ENCODE measurements at regions of chr2 and their contacts with region 1.

Region 1: GRCh38 chr2:133517876-133518275 is 50.4 kb downstream of the NCKAP5 start:
- DNase-seq: no peak
- ATAC-seq: no peak
- H3K4me3 ChIP-seq: no peak overlapping the region
- H3K27ac ChIP-seq: no peak overlapping the region
- H3K4me1 ChIP-seq: no peaks in the 10 kb centered on the region
- H3K27me3 ChIP-seq: no peaks in the 10 kb centered on the region
- CTCF ChIP-seq: no peak
- EP300 ChIP-seq: no peak
- POLR2A ChIP-seq: no peak
- RAD21 ChIP-seq: no peak

Region 2: DNA sequence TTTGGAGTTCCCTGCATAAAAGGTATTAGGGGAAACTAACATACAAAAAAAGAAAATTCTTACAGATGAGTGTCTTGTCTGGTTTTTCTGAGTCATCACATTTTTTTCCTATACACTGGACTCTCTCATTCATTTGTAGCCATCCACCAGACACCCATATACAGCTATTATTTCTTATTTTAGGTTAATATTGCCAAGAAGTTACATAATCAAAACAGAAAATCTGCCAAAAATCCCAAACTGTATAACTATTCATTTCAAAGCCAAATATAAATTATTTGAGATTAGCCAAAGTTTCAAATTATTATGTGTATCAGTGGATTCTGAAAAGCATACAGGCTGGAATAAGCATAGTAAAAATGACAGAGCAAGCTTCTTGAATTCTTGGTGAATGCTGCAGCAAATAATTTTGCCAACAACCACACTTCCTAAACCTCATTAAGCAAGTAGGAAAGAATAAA is 140.8 kb before region 1 on chr2:
- CTCF ChIA-PET with region 1: no interaction called
- POLR2A ChIA-PET with region 1: no interaction called
- in situ Hi-C with region 1: no loop called
- intact Hi-C with region 1: no loop called
- DNase-seq: no peak
- ATAC-seq: no peak
- H3K4me3 ChIP-seq: no peak overlapping the region
- H3K27ac ChIP-seq: no peak overlapping the region
- H3K4me1 ChIP-seq: no peaks in the 10 kb centered on the region
- H3K27me3 ChIP-seq: no peaks in the 10 kb centered on the region
- CTCF ChIP-seq: no peak
- EP300 ChIP-seq: no peak
- POLR2A ChIP-seq: no peak
- RAD21 ChIP-seq: no peak

Region 3: GRCh38 chr2:133504566-133505393 is 13.1 kb before region 1 on chr2:
- CTCF ChIA-PET with region 1: no interaction called
- POLR2A ChIA-PET with region 1: no interaction called
- in situ Hi-C with region 1: no loop called
- intact Hi-C with region 1: no loop called
- DNase-seq: no peak
- ATAC-seq: no peak
- H3K4me3 ChIP-seq: no peak overlapping the region
- H3K27ac ChIP-seq: no peak overlapping the region
- H3K4me1 ChIP-seq: no peaks in the 10 kb centered on the region
- H3K27me3 ChIP-seq: no peaks in the 10 kb centered on the region
- CTCF ChIP-seq: no peak
- EP300 ChIP-seq: no peak
- POLR2A ChIP-seq: no peak
- RAD21 ChIP-seq: no peak

Region 4: DNA sequence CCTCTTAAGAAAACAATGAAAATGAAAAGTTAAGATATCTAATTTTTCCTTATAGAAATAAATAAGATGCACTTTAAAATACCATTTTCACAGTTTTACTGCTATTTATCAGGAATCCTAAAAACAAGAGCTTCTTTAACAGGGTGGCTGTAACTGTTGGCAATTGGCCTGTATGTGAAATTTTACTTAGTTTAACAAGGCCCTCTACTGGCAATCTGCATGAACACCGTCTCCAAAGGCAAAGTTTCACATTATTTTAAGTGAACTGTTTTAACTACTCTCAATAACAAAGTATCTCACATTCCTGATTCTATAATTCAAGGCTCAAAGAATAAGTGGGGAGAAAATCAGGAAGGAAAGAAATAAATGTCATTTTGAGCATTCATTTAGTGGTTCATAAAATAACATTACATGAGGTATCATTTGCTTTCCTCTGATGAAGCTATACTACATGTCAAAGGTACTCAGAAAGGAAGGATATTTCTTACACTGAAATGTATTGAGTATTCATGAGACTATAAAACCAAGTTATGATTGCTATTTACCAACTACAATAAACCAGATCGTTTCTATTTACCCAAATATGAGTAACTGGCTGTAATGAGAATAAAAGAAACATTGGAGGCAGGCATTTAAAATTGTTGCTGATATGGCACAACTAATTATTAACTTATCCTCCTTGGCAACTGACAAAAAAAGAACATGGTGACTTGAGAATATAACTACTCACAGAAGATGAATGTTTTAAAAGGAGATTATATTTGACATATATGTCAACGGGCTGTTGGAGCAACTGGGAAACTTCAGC is 43.4 kb after region 1 on chr2:
- CTCF ChIA-PET with region 1: no interaction called
- POLR2A ChIA-PET with region 1: no interaction called
- in situ Hi-C with region 1: no loop called
- intact Hi-C with region 1: loop called (anchors 2 kb)
- DNase-seq: peak; percentile 33
- ATAC-seq: peak; percentile 69
- H3K4me3 ChIP-seq: no peak overlapping the region
- H3K27ac ChIP-seq: no peak overlapping the region
- H3K4me1 ChIP-seq: no peaks in the 10 kb centered on the region
- H3K27me3 ChIP-seq: no peaks in the 10 kb centered on the region
- CTCF ChIP-seq: peak; percentile 66
- EP300 ChIP-seq: no peak
- POLR2A ChIP-seq: no peak
- RAD21 ChIP-seq: no peak

Region 5: DNA sequence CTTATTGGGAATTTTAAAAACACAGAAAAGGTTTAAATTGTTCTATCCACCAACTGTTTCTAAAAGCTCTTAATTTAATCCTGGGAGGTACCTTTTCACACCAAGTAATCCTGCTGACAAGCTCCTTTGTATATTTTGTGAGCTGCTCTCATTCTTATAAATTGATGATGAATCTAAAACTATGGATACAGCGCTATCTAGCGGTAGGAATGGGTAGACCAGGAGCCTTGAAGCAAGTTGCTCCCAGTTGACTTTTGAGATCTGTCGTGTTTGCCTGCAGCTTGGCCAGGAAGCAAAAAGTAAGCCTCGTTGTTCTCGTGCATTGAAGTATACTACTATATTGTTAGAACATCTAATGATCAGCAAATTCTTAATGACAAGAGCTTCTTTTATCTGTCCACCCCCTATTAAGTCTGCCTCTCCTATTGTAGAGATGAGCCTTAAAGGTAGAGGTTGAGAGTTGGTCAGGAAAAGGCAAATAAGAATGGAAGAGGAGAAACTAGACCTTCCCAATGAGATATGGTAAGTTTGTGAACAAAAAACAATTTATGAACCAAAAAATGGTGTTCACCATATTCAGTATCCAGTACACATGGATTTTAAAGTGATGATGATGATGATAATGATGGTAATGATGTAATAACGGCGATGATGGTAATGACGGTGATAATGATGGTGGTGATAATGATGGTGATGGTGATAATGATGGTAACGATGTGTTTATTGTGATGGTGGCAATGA is 262.4 kb after region 1 on chr2:
- CTCF ChIA-PET with region 1: interaction called, 8 read pairs
- POLR2A ChIA-PET with region 1: no interaction called
- in situ Hi-C with region 1: loop called (anchors 5 kb)
- intact Hi-C with region 1: loop called (anchors 1 kb)
- DNase-seq: peak; percentile 70
- ATAC-seq: peak; percentile 83
- H3K4me3 ChIP-seq: no peak overlapping the region
- H3K27ac ChIP-seq: no peak overlapping the region
- H3K4me1 ChIP-seq: peaks cover 9% of the 10 kb centered on the region
- H3K27me3 ChIP-seq: peaks cover 0 to 5% of the 10 kb centered on the region in 2 experiments; a peak in 2 of 5 replicates
- CTCF ChIP-seq: peak; percentile 84
- EP300 ChIP-seq: no peak
- POLR2A ChIP-seq: no peak
- RAD21 ChIP-seq: peak; percentile 53; the same call in 1 of the 2 replicates

Region 6: DNA sequence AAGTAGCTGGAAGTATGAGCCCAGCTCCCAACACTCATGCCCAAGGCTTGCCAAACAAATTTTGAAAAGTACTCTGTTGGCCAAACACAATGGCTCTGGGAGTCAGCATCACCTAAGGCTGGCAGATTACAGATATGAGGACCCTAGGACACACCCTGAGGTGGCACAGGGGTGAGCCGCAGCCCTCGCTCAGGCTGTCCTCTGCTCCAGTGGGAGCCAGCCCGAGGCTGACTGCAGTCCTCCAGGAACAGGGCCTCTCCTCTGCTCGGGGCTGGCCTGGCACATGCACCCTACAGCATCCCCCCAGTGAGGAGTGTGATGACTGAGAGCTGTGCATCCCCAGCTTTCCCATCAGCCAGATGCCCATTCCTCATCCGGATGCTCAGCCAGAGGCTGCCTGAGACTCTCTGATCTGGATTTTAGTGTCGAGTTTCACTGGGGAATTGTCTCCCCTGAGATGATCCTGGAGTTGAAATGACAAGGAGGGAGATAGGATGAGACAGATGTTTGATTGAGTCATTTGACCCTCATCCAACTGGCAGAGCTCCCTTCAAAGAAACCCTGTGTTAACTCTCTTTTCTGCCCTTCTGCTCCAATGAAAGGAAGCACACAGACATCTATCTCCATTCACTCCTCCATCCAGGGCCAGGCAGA is 319.7 kb after region 1 on chr2:
- CTCF ChIA-PET with region 1: no interaction called
- POLR2A ChIA-PET with region 1: no interaction called
- in situ Hi-C with region 1: loop called (anchors 5 kb)
- intact Hi-C with region 1: no loop called
- DNase-seq: no peak
- ATAC-seq: peak; percentile 34; the same call in 1 of the 3 replicates
- H3K4me3 ChIP-seq: no peak overlapping the region
- H3K27ac ChIP-seq: no peak overlapping the region
- H3K4me1 ChIP-seq: no peaks in the 10 kb centered on the region
- H3K27me3 ChIP-seq: no peaks in the 10 kb centered on the region
- CTCF ChIP-seq: no peak
- EP300 ChIP-seq: no peak
- POLR2A ChIP-seq: no peak
- RAD21 ChIP-seq: no peak

Region 7: DNA sequence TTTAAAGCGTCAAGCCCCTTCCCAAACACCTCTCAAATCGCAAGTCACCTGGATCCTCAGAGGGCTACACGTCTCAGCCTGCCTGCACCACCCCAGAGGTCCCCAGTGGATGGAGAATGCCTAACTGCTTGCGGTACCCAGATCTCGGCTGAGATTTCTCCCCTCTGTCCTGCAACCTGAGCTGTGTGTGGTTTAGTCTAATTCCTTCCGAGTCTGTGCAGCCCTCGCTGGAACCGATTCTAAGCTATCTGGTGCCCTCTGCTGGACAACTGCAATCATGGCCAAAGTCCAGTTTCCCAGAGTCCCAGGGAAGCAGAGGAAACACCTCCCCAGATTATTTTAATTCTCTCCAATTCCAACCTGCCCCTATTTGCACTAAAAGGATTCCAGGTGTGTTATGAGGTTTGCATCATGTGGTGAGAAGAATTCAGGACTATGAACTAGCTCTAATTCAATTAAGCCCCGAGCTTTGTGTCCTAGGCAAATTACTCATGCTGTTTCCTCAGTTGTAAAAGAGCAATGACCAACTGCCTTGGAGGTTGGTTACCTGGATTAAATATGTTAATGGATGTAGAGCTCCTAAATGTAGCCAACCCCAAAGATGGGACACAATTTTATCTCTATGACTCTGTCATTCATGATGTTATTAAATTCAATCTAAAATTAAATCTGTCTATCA is 326.5 kb after region 1 on chr2:
- CTCF ChIA-PET with region 1: interaction called, 9 read pairs
- POLR2A ChIA-PET with region 1: no interaction called
- in situ Hi-C with region 1: loop called (anchors 5 kb)
- intact Hi-C with region 1: loop called (anchors 1 kb)
- DNase-seq: peak; percentile 58
- ATAC-seq: peak; percentile 96
- H3K4me3 ChIP-seq: no peak overlapping the region
- H3K27ac ChIP-seq: no peak overlapping the region
- H3K4me1 ChIP-seq: no peaks in the 10 kb centered on the region
- H3K27me3 ChIP-seq: peaks cover 0 to 1% of the 10 kb centered on the region in 2 experiments; a peak in 2 of 5 replicates
- CTCF ChIP-seq: peak; percentile 93
- EP300 ChIP-seq: no peak
- POLR2A ChIP-seq: no peak
- RAD21 ChIP-seq: peak; percentile 86

Measured in HepG2 (cell line).